GM23248 (cell line): ENCODE measurements at regions of chr17 and their contacts with region 1.

Region 1: DNA sequence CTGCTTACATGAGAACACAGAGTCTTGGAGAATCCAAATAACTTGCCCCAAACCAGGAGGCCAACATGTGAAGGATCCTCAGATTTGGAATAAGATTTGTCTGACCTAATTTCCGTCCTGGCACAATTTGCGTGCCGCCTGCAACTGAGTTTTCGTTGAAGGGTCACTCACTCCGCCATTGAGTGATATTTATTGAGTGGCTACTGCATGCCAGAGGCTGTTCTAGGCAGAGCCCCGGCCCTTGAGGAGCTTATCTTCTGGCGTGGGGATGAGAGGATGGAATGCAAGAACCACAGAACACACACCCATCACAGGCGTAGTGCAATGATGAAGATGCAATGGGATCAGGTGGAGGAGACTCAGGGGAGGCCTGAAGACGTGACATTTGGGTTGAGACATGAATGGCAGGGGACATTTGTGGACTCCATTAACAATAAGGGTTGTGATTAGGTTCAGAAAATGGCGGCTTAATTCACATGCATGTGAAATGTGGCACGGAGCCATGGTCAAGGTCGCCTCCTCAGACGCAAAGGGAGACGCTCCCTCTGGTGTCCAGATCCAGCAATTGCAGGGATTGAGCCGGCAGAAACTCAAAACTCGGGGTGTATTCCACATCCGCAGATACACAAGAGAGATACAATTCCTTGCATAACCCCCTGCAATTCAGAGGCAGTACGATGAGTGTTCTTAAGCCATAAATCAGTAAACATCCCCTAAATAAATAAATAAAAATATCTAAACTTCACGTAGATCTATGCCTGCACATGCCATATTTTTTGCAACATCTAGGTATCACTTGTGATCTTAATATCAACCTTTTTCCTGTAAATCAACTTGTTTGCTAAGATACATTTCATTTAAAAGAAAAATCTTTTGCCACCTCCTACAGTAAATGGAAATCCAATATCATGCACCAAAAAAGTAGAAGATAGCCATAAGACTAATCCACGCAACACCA is 57.9 kb upstream of the CACNG4 start:
- DNase-seq: peak; percentile 85
- H3K4me3 ChIP-seq: no peak overlapping the region
- H3K27ac ChIP-seq: no peak overlapping the region
- H3K4me1 ChIP-seq: no peaks in the 10 kb centered on the region
- H3K27me3 ChIP-seq: peaks cover 19% of the 10 kb centered on the region

Region 2: DNA sequence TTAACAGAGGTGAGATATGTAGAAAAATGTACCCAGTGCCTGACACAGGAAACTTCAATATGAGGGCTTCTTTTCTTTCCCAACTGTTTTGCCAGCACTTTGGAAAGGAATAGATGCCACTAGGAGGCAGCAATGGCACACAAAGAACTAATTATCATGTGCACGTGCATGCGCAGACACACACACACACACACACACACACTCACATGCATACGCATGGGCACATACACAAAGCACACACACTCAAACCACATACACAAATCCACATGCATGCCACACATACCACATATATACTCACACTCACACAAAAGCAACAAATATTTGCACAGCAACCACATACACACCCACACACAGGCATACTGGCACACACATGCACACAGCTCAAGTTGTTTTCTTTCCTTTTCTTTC is 705.9 kb before region 1 on chr17:
- in situ Hi-C with region 1: loop called (anchors 25 kb)
- DNase-seq: peak; percentile 74
- H3K4me3 ChIP-seq: no peak overlapping the region
- H3K27ac ChIP-seq: no peak overlapping the region
- H3K4me1 ChIP-seq: no peaks in the 10 kb centered on the region
- H3K27me3 ChIP-seq: no peaks in the 10 kb centered on the region; the same call in 1 of the 2 replicates

Region 3: DNA sequence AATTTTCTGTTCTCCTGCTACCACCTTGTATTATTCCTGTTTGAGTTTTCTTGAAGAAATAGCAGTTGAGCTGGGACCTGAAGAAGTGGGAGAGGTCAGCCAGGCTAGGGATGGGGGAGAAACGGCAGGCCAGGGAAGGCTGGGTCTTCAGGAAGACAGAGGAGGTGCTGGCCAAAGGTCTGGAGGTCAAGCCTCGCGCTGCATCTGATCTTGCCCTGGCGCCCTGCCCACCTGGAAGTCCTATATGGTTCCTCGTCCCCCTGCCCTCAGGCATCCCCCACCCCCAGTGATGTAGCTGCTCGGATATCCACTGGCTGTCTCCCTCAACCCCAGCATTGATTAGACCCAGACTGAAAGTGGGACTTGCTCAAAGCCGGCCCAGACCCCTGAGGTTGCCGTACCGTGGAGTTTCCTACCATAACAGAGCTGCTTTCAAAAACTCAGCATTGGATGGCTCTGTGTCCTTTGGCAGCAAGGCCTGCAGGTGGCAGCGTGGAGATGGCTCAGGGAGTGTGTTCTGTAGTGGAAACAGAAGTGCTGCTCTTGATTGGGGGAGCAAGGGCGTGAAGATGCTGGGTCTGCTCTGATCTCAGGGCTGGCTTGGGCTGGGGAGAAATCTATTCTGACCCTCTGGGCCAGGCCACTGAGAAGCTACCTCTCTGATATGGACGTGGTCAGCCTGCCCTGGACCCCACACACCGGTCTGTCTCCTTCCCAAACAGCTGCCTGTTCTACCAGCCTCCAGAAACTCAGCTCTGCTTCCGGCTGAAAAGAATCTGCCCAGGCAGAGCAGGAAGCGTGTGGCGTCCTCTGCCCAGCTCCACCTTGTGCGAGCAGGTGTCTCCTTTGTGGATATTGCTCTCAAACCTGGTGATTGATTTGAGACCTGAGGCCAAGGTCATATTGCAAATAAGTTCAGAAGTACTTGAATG is 178.7 kb before region 1 on chr17:
- in situ Hi-C with region 1: loop called (anchors 10 kb)
- DNase-seq: peak; percentile 68
- H3K4me3 ChIP-seq: no peak overlapping the region
- H3K27ac ChIP-seq: no peak overlapping the region
- H3K4me1 ChIP-seq: no peaks in the 10 kb centered on the region; the same call in 1 of the 2 replicates
- H3K27me3 ChIP-seq: no peaks in the 10 kb centered on the region